ENCODE measurements at regions of chr21 and their contacts with region 1.

Region 1: DNA sequence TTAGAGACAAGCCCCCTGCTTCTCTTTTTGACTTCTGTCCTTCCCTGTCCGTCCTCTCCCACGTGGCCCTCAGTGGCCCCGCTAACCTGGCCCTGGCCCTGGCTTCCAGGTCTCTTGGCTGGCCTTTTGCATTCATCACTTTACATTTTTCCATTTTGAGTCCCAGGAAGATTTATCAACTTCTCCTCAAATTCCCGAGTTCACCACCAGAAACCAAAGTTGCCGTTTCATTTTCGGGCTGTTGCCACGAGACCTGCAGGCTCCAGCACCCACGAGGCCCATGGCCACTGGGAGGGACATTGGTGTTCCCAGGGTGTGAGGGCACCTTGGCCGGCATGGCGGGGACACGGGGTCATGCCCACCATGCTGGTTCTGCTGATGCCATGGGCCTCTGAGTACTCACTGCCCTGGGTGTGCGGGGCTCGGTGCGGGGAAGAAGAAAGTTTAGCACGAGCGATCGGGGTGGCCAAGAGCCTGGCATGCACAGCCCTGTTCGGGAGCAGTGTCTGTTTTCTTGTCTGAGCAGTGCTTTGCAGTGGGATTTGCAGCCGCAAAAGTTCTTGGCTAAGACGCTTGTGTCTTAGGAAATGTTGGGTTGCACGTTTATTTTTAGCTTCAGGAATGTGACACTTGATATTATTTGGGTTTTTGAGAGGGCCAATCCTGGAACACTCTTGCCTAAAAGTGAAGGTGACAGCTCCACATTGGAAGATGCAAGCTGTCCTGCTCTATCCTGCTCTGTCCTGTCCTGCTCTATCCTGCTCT is 40.4 kb upstream of the ADARB1 start:
- DNase-seq: no peak
- ATAC-seq: peak; percentile 7 to 66 (median 28)
- H3K4me3 ChIP-seq: peak overlapping the region in 6 of 10 donors; percentile 5 to 30 (median 18)
- H3K27ac ChIP-seq: peak overlapping the region in 8 of 10 donors; percentile 1 to 71 (median 44)
- H3K4me1 ChIP-seq: peaks cover 8 to 52% (median 34%) of the 10 kb centered on the region in 9 donors
- H3K27me3 ChIP-seq: no peaks in the 10 kb centered on the region
- CTCF ChIP-seq: no peak

Region 2: DNA sequence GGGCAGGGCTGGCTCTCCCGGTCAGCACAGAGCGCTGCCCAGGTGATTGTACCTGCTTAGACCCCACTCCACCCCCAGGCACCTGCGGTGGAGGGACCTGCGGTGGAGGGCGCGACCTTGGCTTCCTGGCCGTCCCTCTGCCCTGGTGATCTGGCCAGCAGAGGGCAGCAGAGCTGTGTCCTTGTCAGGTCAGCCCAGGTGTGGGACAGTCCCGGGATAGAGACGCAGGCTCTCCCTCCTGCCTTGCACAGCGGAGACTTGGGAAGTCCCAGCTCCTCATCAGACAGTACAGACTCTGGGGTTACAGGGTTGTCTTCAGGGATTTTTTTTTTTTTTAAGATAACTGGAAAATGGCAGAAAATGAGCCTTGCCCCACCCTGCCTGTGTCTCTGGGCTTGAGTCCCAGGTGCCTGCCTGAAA is 84.2 kb before region 1 on chr21:
- intact Hi-C with region 1: loop called in 1 of 10 experiments (anchors 10 kb)
- DNase-seq: peak; percentile 91 to 93
- ATAC-seq: peak; percentile 63 to 76 (median 67)
- H3K4me3 ChIP-seq: no peak overlapping the region
- H3K27ac ChIP-seq: peak overlapping the region; percentile 42 to 86 (median 79)
- H3K4me1 ChIP-seq: peaks cover 13 to 90% (median 53%) of the 10 kb centered on the region in 9 donors
- H3K27me3 ChIP-seq: no peaks in the 10 kb centered on the region
- CTCF ChIP-seq: peak; percentile 88 to 98 (median 96)

Region 3: DNA sequence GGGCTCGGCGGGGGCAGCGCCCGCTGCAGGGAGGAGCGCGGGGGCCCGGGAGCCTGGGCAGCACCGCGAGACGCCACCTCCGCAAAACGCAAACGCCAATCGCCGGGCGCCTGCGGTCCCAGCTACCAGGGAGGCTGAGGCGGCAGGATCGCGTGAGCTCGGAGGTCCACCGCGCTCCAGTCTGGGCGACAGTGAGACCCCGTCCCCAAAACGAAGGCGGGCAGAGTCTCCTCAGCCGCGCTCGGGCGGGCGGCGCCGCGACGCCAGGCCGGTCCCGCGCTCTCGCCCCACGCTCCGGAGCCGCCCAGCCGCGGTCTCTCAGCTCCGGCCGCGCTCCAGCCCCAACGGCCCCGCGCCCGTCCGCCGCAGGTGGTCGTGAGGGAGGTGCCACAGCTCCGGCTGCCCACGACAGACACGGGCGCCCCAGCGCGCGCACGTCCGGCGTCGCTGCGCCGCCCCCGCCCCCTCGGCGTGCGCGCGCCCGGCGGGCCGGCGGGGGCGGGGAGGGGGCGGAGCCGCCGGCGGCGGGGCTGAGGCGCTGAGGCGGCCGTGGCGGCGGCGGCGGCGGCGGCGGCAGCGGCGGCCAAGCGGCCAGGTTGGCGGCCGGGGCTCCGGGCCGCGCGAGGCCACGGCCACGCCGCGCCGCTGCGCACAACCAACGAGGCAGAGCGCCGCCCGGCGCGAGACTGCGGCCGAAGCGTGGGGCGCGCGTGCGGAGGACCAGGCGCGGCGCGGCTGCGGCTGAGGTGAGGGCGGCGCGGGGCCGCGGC is 40.3 kb after region 1 on chr21 and contains the start of gene ADARB1:
- intact Hi-C with region 1: no loop called
- DNase-seq: peak; percentile 48 to 78
- ATAC-seq: peak; percentile 51 to 91 (median 72)
- H3K4me3 ChIP-seq: peak within 1 kb of the TSS; percentile 84 to 100 (median 89)
- H3K27ac ChIP-seq: peak within 1 kb of the TSS; percentile 83 to 97 (median 94)
- H3K4me1 ChIP-seq: peaks cover 4 to 48% (median 24%) of the 10 kb centered on the region in 9 donors
- H3K27me3 ChIP-seq: peaks cover 0 to 8% (median 0%) of the 10 kb centered on the region in 7 donors
- CTCF ChIP-seq: no peak
- total RNA-seq, gene ADARB1: 11.8 to 21.2 (median 13.5) TPM

Region 4: DNA sequence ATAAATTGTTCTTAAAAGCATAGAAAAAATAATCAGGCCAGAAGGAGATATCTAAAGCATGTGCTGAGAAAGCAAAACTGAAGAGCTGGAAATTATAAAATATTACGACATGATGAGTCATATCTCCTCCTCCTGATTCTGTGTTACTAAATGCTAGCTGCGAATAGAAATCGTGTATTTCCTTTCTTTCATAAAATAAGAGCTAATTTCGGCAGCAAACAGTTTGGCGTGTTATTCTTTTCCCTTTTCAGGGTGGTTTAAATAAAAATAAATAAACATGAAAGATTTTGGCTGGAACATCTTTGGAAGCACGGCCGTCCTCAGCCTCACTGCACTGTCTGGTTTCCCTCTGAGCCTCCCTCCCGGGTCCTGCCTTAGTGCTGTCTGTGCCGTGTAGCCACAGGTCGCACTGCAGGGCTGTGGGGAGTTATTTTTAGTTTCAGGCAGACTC is 96.4 kb after region 1 on chr21:
- intact Hi-C with region 1: no loop called
- DNase-seq: peak in 1 of 2 donors; percentile 41
- ATAC-seq: peak in 7 of 8 donors; percentile 46 to 75 (median 64)
- H3K4me3 ChIP-seq: peak overlapping the region in 7 of 10 donors; percentile 1 to 32 (median 20)
- H3K27ac ChIP-seq: peak overlapping the region in 9 of 10 donors; percentile 55 to 87 (median 71)
- H3K4me1 ChIP-seq: peaks cover 15 to 75% (median 57%) of the 10 kb centered on the region in 9 donors
- H3K27me3 ChIP-seq: no peaks in the 10 kb centered on the region
- CTCF ChIP-seq: no peak

Region 5: DNA sequence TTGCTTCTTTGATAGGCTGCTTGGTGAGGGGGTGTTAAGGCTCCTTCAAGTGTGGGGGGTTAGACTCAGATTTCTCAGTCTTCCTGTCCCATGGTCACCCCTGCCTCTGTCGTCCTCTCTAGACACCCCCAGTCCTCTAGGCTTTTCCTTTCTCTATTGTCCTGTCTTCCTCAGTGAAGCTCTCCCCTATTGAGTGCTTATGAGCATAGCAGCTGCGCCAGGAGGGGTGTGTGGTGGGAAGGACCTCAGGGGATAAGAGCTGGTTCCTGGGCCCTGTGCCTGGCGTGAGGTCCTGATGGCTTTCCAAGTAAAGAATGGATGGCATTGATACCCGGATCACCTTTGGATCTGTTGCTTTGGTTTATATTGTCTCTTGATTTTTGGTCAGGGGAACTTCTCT is 1493.8 kb after region 1 on chr21:
- intact Hi-C with region 1: no loop called
- DNase-seq: no peak
- ATAC-seq: no peak
- H3K4me3 ChIP-seq: no peak overlapping the region
- H3K27ac ChIP-seq: no peak overlapping the region
- H3K4me1 ChIP-seq: peaks cover 0 to 18% (median 8%) of the 10 kb centered on the region in 9 donors
- H3K27me3 ChIP-seq: no peaks in the 10 kb centered on the region
- CTCF ChIP-seq: no peak

Measured in heart right ventricle (tissue), 16 donors.